T-cell (primary cell): ENCODE measurements at regions of chr6 and their contacts with region 1.

Region 1: DNA sequence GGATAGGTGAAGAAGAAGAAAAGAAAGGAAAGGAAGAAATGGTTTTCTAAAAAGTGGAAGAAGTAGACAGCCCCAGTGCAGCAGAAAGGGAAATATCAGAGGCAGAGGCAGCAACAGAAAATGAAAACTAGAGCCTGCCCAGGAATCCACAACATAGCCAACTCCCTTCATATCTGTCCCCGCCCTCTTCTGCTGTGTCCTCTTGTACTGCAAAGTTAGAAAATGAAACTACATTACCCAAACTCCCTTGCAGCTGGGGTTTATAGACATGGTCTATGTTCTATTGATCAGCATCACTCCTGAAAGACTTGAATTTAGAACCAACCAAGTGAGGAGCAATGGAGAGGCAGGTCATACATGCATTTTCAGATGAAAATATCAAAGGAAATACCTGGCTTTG is 200.5 kb upstream of the PHACTR1 start:
- DNase-seq: no peak
- ATAC-seq: no peak
- H3K4me3 ChIP-seq: no peak overlapping the region
- H3K4me3 Mint-ChIP-seq: no peak overlapping the region
- H3K27ac ChIP-seq: no peak overlapping the region
- H3K27ac Mint-ChIP-seq: no peak overlapping the region
- H3K4me1 ChIP-seq: no peaks in the 10 kb centered on the region
- H3K4me1 Mint-ChIP-seq: no peaks in the 10 kb centered on the region
- H3K27me3 ChIP-seq: no peaks in the 10 kb centered on the region
- H3K27me3 Mint-ChIP-seq: peaks cover 0 to 9% of the 10 kb centered on the region in 2 donors

Region 2: DNA sequence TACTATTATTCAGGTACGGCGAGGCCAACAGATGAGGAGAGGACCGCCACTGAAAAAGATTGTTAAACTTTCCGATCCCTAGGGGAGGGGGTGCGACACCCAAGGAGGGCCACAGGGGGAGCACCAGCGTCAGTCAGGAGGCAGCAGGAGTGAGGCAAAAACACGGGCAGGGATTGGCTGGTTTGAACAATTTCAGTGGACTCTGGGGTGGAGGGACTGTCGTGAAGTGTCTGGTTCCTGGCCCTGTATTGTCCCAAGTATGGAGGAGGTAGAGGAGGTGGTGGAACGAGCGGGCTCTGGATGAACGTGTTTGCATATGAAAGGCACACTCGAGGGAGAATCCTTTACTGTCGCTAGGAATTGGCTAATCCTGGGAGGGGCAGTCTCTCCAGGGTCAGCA is 1330.8 kb after region 1 on chr6:
- CTCF ChIA-PET with region 1: no interaction called
- POLR2A ChIA-PET with region 1: interaction called in 1 of 2 experiments, 14 read pairs
- DNase-seq: no peak
- ATAC-seq: no peak
- H3K4me3 ChIP-seq: no peak overlapping the region
- H3K4me3 Mint-ChIP-seq: no peak overlapping the region
- H3K27ac ChIP-seq: no peak overlapping the region
- H3K27ac Mint-ChIP-seq: no peak overlapping the region
- H3K4me1 ChIP-seq: no peaks in the 10 kb centered on the region
- H3K4me1 Mint-ChIP-seq: no peaks in the 10 kb centered on the region
- H3K27me3 ChIP-seq: peaks cover 0 to 9% of the 10 kb centered on the region in 2 experiments
- H3K27me3 Mint-ChIP-seq: peaks cover 5 to 8% of the 10 kb centered on the region in 2 donors